ENCODE measurements at regions of chr22 and their contacts with region 1.

Region 1: GRCh38 chr22:31970490-31971444 is 26.4 kb downstream of the YWHAH start:
- DNase-seq: peak; percentile 88
- H3K4me3 Mint-ChIP-seq: peak overlapping the region; percentile 82
- H3K27ac Mint-ChIP-seq: peak overlapping the region; percentile 71
- H3K4me1 Mint-ChIP-seq: peaks cover 6% of the 10 kb centered on the region
- H3K27me3 Mint-ChIP-seq: no peaks in the 10 kb centered on the region
- CTCF ChIP-seq: peak; percentile 94

Region 2: DNA sequence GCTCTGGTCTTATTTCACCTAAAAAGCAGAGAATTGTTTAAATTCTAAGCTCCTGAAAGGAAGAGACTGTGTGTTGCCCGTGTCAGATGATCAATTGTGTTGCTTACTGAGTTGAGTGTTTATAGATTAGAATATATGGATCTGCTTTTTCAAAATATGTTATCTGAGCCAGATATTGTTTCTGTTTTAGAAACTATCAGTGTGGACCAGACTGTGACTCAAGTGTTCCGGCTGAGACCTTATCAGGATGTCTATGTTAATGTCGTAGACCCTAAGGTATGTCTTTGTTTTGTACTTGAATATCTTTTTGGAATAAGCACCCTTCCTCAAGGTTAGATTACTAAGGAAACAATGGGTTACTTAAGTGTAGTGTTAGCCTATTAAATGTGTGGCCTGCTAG is 206.0 kb before region 1 on chr22:
- CTCF ChIA-PET with region 1: no interaction called
- POLR2A ChIA-PET with region 1: no interaction called
- intact Hi-C with region 1: no loop called
- DNase-seq: no peak
- H3K4me3 Mint-ChIP-seq: no peak overlapping the region
- H3K27ac Mint-ChIP-seq: no peak overlapping the region
- H3K4me1 Mint-ChIP-seq: no peaks in the 10 kb centered on the region
- H3K27me3 Mint-ChIP-seq: no peaks in the 10 kb centered on the region
- CTCF ChIP-seq: no peak

Region 3: GRCh38 chr22:31820655-31821054 is 150.1 kb before region 1 on chr22:
- CTCF ChIA-PET with region 1: no interaction called
- POLR2A ChIA-PET with region 1: no interaction called
- intact Hi-C with region 1: no loop called
- DNase-seq: no peak
- H3K4me3 Mint-ChIP-seq: no peak overlapping the region
- H3K27ac Mint-ChIP-seq: peak overlapping the region; percentile 2
- H3K4me1 Mint-ChIP-seq: no peaks in the 10 kb centered on the region
- H3K27me3 Mint-ChIP-seq: no peaks in the 10 kb centered on the region
- CTCF ChIP-seq: no peak

Region 4: GRCh38 chr22:31872209-31872608 is 98.6 kb before region 1 on chr22:
- CTCF ChIA-PET with region 1: interaction called, 16 read pairs
- POLR2A ChIA-PET with region 1: no interaction called
- intact Hi-C with region 1: no loop called
- DNase-seq: peak; percentile 13
- H3K4me3 Mint-ChIP-seq: no peak overlapping the region
- H3K27ac Mint-ChIP-seq: no peak overlapping the region
- H3K4me1 Mint-ChIP-seq: peaks cover 16% of the 10 kb centered on the region
- H3K27me3 Mint-ChIP-seq: no peaks in the 10 kb centered on the region
- CTCF ChIP-seq: no peak

Region 5: DNA sequence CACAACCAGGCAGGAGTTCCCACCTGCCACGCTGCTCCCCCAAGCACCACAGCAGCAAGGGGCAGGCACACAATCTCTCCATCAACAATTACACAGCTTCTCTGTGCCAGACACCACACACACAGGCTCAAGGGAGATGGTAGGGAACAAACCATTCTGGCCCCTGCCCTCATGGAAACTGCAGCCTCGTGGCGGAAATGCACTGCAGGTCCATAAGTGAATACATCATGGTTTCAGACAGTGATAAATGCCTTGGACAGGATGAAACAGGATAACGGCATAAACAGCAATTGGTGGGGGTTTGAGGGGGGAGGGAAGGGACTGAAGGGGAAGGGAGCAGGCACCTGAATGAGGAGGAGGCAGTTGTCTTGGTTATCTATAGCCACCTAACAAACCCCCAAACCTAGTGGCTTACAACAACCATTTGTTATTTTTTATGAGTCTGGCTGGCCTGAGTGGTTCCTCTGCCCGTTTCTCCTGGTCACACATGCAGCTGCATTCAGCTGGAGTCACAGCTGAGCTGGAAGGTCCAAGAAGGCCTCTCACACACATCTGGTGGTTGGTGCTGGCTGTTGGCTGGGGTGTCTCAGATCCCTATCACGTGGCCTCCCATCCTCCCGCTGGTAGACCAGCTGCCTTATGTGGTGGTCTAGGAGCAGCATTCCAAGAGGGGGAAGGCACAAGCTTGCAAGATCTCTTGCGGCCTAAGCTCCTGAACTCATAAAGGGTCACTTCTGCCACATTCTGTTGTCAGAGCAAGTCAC is 41.4 kb before region 1 on chr22:
- CTCF ChIA-PET with region 1: no interaction called
- POLR2A ChIA-PET with region 1: no interaction called
- intact Hi-C with region 1: no loop called
- DNase-seq: no peak
- H3K4me3 Mint-ChIP-seq: no peak overlapping the region
- H3K27ac Mint-ChIP-seq: no peak overlapping the region
- H3K4me1 Mint-ChIP-seq: no peaks in the 10 kb centered on the region
- H3K27me3 Mint-ChIP-seq: peaks cover 44% of the 10 kb centered on the region
- CTCF ChIP-seq: no peak

Region 6: DNA sequence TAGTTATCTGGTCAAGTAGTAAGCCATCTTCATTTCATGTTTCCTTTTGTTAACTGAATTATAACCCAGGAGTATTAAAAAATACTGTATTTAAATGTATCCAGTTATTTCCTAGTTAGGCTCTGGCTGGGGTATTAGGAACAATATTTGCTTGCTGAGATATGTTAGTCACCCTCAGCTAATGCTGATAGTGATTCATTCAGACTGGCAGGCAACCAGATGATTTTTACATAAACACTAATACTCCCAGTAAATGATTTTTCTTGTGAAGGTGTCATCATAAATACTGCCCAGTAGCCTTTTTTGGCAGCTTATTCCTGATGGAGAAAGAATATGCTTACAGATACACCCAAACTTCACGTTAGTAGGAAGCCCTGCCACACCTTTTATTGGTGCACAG is 18.3 kb before region 1 on chr22:
- CTCF ChIA-PET with region 1: interaction called, 56 read pairs
- POLR2A ChIA-PET with region 1: interaction called, 6 read pairs
- intact Hi-C with region 1: no loop called
- DNase-seq: peak; percentile 86
- H3K4me3 Mint-ChIP-seq: no peak overlapping the region
- H3K27ac Mint-ChIP-seq: peak overlapping the region; percentile 97
- H3K4me1 Mint-ChIP-seq: peaks cover 49% of the 10 kb centered on the region
- H3K27me3 Mint-ChIP-seq: no peaks in the 10 kb centered on the region
- CTCF ChIP-seq: no peak

Region 7: GRCh38 chr22:32144496-32145274 is 173.9 kb after region 1 on chr22:
- CTCF ChIA-PET with region 1: no interaction called
- POLR2A ChIA-PET with region 1: no interaction called
- intact Hi-C with region 1: no loop called
- DNase-seq: peak; percentile 13
- H3K4me3 Mint-ChIP-seq: no peak overlapping the region
- H3K27ac Mint-ChIP-seq: no peak overlapping the region
- H3K4me1 Mint-ChIP-seq: no peaks in the 10 kb centered on the region
- H3K27me3 Mint-ChIP-seq: peaks cover 9% of the 10 kb centered on the region
- CTCF ChIP-seq: no peak